Posterior cingulate gyrus (tissue), 11 donors: ENCODE measurements at regions of chr10 and their contacts with region 1.

Region 1: DNA sequence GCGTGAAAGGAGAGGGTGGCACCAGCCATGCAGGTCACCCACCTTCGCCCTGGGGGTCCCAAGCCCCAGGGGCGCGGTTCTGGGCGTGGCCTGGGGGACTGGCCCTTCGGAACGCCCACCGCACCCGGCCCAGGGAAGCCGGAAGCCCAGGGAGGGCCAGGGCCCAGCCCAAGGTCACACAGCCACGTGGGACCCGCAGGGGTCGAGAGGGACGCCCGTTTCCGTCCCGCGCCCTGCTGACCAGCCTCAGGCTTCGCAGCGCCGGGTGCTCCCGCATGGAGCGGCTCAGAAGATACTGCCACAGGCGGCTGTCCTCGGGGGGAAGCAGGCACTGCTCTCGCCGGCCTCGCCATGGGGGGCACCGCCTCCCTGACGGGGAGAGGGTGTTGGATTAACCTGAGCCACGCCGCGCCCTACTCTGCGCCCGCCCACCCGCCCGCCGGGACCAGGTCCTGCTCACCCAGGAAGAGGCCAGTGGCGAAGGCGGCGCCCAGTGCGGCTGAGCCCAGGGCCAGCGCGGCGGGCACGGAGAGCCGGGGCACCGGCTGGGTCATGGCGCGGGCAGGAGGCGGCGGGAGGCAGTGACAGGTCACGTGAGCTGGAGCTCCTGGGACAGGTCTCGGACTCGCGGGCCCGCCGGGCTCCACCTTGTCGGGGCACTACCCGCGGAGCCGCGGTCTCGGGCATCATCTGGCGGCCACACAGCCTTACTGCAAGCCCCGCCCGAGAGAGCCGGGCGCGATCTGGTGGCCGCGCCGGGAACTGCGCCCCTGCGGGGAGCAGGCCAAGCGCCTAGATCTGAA is at the start of gene COMTD1:
- DNase-seq: peak; percentile 80 to 99 (median 92)

Region 2: DNA sequence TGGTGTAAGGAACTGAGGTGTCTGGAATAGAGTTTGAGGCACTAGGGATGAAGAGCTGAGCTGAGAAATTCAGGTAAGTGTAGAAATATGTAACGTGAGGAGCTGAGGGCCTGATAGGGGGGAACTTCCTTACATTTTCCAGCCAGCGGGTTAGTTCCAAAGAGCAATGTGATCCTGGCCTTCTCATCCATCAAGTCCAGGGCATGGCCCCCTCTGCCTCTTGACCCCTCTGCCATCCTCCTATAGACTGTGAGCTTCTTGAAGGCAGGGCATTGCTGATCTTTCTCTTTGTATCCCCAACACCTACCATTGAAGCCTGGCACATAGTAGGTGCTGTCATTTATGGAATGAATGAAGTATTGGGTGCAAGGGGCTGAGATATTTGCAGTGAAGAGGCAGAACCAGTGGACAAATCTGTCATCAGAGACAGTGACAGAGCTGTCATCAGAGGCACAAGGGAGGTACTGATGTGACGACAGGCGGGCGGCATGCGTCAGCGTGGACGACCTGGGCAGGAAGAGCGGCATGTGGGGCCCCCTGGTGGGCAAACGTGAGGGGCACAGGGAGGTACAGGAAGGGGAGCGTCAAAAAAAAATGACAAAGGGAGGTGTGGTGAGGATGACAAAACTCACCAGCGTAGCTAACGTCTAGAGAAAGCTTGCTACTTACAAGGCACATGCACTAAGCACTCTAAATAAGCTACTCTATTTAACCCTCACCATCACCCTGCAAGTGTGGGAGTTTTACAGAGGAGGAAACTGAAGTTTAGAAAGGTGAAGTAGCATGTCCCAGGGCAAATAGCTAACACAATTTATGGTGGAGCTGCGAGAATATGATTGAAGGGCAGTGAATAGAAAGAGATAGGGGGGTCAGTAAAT is 1356.0 kb before region 1 on chr10:
- intact Hi-C with region 1: loop called (anchors 10 kb)
- DNase-seq: peak; percentile 55 to 97 (median 73)

Region 3: GRCh38 chr10:74244097-74244685 is 991.4 kb before region 1 on chr10:
- intact Hi-C with region 1: loop called (anchors 5 kb)
- DNase-seq: no peak

Region 4: DNA sequence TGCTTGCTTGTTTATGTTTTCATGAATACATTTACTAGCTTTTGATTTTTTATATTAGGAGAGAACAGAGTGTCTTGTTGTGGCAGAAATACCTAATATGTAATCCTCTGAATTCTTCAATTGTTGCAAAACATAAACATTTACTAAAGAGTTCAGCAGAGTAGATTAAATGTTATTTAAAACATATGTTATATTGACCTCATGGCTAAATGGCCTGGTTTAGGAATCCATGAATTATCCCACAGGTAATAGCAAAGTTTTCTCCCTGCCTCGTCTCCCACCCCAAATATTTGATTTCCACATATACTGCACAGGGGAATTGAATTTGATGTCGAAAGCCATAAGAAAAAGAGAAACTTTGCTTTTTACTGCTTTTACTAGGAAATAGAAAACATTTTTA is 972.7 kb before region 1 on chr10:
- intact Hi-C with region 1: loop called (anchors 2 kb)
- DNase-seq: no peak

Region 5: GRCh38 chr10:75000748-75001321 is 234.7 kb before region 1 on chr10:
- intact Hi-C with region 1: loop called (anchors 10 kb)
- DNase-seq: no peak

Region 6: GRCh38 chr10:75111367-75111906 is 124.1 kb before region 1 on chr10 and contains the start of gene SAMD8:
- intact Hi-C with region 1: loop called (anchors 5 kb)
- DNase-seq: peak; percentile 89 to 99 (median 93)

Region 7: DNA sequence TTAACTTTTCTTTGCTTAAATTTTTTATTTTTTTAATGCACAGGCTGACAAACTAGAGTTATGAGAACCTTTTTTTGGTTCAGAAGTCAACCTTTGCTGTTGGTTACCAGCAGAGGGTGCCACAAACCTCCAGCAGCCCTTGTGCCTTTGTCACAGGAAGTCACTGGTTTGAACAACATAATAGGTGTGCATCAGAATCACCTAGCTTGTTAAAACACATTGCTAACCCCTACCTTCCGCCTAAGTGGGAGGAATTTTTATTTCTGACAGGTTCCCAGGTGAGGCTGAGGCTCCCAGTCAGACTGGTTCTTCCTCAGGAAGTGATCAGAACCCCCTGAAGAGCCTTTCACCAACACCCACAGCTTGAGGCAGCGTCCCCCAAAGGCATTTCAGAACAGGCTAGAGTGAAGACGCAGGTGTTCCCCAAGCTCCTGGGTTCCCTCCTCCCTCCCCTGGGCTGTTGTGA is 47.6 kb before region 1 on chr10:
- intact Hi-C with region 1: loop called (anchors 2 kb)
- DNase-seq: peak in 6 of 10 donors; percentile 15 to 90 (median 38)